Activated T-helper 1 cell treated with anti-CD3 and anti-CD28 coated beads, Interleukin-12 subunit alpha, Interleukin-12 subunit beta, Interleukin-2, Interleukin-4 antibody, amounts not matched to agents 30 ng/mL and 10 ng/mL and 1 ng/mL, durations not matched to agents 14 hours and 24 hours and 36 hours (primary cell): ENCODE measurements at regions of chr16 and their contacts with region 1.

Region 1: GRCh38 chr16:31179747-31180459 is at the start of gene FUS:
- DNase-seq: peak; percentile 88
- H3K4me3 Mint-ChIP-seq: peak within 1 kb of the TSS; percentile 98
- H3K27ac Mint-ChIP-seq: peak within 1 kb of the TSS; percentile 99
- H3K4me1 Mint-ChIP-seq: peaks cover 54% of the 10 kb centered on the region
- H3K27me3 Mint-ChIP-seq: no peaks in the 10 kb centered on the region
- total RNA-seq, gene FUS: 950 and 955 TPM in 2 replicates

Region 2: DNA sequence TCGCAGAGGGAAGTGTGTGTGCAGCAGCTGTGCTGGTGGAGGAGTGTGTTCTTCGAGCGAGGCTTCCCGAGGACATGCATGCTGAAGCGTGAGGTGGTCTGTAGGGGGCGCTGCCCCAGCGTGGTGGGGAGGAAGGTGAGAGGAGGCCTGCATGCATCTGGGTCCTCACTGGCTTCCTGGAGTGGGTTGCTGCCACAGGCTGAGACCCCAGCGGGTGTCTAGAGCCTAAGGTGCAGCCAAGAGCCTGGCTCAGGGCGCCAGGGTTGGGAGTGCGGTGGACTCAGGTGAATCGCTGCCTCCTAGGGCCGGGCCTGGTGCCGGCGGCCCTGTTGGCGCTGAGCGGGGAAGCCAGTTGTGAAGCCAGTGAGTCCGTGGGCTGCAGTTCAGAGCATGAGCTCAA is 202.4 kb before region 1 on chr16:
- intact Hi-C with region 1: no loop called
- DNase-seq: no peak
- H3K4me3 Mint-ChIP-seq: no peak overlapping the region
- H3K27ac Mint-ChIP-seq: no peak overlapping the region
- H3K4me1 Mint-ChIP-seq: no peaks in the 10 kb centered on the region
- H3K27me3 Mint-ChIP-seq: no peaks in the 10 kb centered on the region

Region 3: GRCh38 chr16:31032736-31033708 is 146.9 kb before region 1 on chr16 and contains the start of gene STX4:
- intact Hi-C with region 1: loop called (anchors 2 kb)
- DNase-seq: peak; percentile 97
- H3K4me3 Mint-ChIP-seq: peak within 1 kb of the TSS; percentile 95
- H3K27ac Mint-ChIP-seq: peak within 1 kb of the TSS; percentile 92
- H3K4me1 Mint-ChIP-seq: peaks cover 24% of the 10 kb centered on the region
- H3K27me3 Mint-ChIP-seq: no peaks in the 10 kb centered on the region
- total RNA-seq, gene STX4: 56.4 and 58.7 TPM in 2 replicates

Region 4: DNA sequence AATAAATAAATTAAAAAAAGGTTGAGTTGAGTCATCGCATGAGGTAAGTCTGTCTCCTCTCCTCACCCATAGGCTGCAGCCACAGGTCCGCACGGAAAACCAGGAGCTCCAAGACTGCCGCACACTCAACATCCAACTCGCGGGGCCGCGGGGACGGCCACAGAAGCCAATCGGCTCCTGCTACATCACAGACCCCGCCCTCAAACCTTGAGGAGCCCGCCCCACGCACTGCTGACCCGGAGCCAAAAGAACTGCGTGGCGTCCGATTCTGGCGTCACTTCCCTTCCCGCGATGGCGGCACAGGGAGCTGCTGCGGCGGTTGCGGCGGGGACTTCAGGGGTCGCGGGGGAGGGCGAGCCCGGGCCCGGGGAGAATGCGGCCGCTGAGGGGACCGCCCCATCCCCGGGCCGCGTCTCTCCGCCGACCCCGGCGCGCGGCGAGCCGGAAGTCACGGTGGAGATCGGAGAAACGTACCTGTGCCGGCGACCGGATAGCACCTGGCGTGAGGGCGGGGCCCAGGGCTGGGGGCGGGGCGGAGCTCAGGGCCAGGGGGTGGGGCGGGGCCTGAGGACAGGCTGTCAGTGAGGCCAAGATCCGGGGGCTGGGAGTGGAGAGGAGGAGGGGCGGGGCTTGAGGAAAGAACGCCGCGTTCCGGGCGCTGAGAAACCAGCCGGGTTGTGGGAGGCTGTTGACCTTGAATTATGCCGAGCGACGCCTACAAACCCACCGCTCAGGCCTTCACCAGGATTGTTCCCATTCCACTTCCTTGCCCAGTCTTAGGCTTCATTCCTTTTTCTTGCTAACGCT is 62.3 kb before region 1 on chr16 and contains the start of gene KAT8:
- intact Hi-C with region 1: loop called (anchors 1 kb)
- DNase-seq: peak; percentile 95
- H3K4me3 Mint-ChIP-seq: peak within 1 kb of the TSS; percentile 88
- H3K27ac Mint-ChIP-seq: peak within 1 kb of the TSS; percentile 92
- H3K4me1 Mint-ChIP-seq: peaks cover 19% of the 10 kb centered on the region
- H3K27me3 Mint-ChIP-seq: no peaks in the 10 kb centered on the region
- total RNA-seq, gene KAT8: 55.4 and 58.2 TPM in 2 replicates

Region 5: DNA sequence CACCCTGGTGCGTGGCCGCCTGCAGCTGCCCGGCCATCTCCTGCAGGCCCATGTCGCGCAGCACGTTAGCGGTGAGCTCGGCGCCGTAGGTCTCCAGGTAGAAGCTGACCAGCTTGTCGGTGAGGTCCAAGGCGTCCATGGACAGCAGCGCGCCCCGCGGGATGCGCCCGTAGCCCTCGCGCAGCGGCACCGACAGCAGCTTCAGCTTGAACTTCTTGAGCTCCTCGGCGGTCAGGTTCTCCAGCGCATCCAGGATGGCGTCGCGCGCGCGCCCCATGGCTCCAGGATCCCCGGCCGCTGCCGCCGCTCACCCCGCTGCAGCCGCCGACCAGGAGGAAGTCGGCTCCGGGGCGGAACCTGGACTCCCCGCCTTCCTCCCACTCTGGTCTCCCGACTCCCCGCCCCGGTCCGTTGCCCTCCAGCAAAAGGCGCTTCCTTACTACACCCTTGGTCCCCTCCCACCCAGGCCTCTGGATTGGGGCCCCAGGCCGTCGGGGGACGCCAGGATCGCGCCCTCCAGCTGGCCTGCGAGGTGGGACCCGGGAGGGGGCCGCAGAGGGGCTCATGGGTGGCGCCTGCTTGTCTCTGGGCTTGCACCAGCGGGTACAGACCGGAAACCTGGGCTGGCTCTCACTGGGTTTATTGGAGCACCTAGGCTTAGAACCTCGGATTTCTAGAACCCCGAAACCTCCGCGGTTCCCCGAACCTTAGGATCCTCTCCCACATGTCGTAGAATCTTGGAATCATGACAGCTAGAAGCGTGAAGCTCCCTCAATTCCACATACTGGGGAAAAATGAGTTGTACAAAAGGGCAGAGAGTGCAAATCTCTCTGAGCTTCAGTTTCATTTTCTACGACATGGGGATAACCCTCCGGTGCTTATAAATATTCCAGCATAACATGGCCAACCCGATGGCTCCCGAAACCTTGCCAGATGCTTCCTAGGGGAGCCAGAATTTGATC is 22.8 kb after region 1 on chr16 and contains the start of gene PYCARD:
- intact Hi-C with region 1: loop called (anchors 1 kb)
- DNase-seq: no peak
- H3K4me3 Mint-ChIP-seq: peak within 1 kb of the TSS; percentile 85
- H3K27ac Mint-ChIP-seq: peak within 1 kb of the TSS; percentile 80
- H3K4me1 Mint-ChIP-seq: peaks cover 55% of the 10 kb centered on the region
- H3K27me3 Mint-ChIP-seq: peaks cover 5% of the 10 kb centered on the region
- total RNA-seq, gene PYCARD: 20.9 and 21.2 TPM in 2 replicates

Region 6: GRCh38 chr16:31421587-31421986 is 241.7 kb after region 1 on chr16:
- intact Hi-C with region 1: loop called (anchors 5 kb)
- DNase-seq: peak; percentile 69
- H3K4me3 Mint-ChIP-seq: peak overlapping the region; percentile 44
- H3K27ac Mint-ChIP-seq: peak overlapping the region; percentile 77
- H3K4me1 Mint-ChIP-seq: peaks cover 62% of the 10 kb centered on the region
- H3K27me3 Mint-ChIP-seq: peaks cover 2% of the 10 kb centered on the region

Region 7: GRCh38 chr16:31853300-31853699 is 673.4 kb after region 1 on chr16:
- intact Hi-C with region 1: no loop called
- DNase-seq: no peak
- H3K4me3 Mint-ChIP-seq: no peak overlapping the region
- H3K27ac Mint-ChIP-seq: no peak overlapping the region
- H3K4me1 Mint-ChIP-seq: no peaks in the 10 kb centered on the region
- H3K27me3 Mint-ChIP-seq: peaks cover 16% of the 10 kb centered on the region